OCI-LY7 (cell line): ENCODE measurements at regions of chr1 and their contacts with region 1.

Region 1: GRCh38 chr1:29793101-29793546 is 556.8 kb downstream of the PTPRU start:
- DNase-seq: peak; percentile 80
- H3K4me3 ChIP-seq: no peak overlapping the region
- H3K27ac ChIP-seq: no peak overlapping the region
- H3K4me1 ChIP-seq: peaks cover 5% of the 10 kb centered on the region
- CTCF ChIP-seq: peak; percentile 88

Region 2: DNA sequence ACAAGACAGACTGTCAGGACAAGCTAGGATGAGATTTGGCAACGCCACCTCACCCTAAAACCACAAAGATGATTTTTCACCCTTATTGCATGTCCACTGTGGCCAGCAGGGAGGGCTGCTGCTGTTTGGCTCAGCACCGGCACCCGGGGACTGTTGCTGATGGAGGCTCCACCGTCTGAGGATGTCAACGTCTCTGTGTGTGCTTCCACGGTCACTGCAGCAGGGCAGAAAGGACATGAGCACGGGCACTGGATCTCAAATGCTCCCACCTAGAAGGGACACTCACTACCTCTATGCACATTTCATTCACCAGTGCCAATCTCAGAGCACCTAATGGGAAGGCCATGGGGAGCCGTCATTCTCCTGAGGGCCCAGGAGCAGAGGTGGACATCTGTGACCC is 42.8 kb after region 1 on chr1:
- CTCF ChIA-PET with region 1: no interaction called
- POLR2A ChIA-PET with region 1: no interaction called
- intact Hi-C with region 1: no loop called
- DNase-seq: no peak
- H3K4me3 ChIP-seq: no peak overlapping the region
- H3K27ac ChIP-seq: no peak overlapping the region
- H3K4me1 ChIP-seq: no peaks in the 10 kb centered on the region
- CTCF ChIP-seq: no peak

Region 3: GRCh38 chr1:30171537-30172298 is 378.6 kb after region 1 on chr1:
- CTCF ChIA-PET with region 1: no interaction called
- POLR2A ChIA-PET with region 1: no interaction called
- intact Hi-C with region 1: no loop called
- DNase-seq: no peak
- H3K4me3 ChIP-seq: no peak overlapping the region
- H3K27ac ChIP-seq: no peak overlapping the region
- H3K4me1 ChIP-seq: no peaks in the 10 kb centered on the region
- CTCF ChIP-seq: no peak

Region 4: DNA sequence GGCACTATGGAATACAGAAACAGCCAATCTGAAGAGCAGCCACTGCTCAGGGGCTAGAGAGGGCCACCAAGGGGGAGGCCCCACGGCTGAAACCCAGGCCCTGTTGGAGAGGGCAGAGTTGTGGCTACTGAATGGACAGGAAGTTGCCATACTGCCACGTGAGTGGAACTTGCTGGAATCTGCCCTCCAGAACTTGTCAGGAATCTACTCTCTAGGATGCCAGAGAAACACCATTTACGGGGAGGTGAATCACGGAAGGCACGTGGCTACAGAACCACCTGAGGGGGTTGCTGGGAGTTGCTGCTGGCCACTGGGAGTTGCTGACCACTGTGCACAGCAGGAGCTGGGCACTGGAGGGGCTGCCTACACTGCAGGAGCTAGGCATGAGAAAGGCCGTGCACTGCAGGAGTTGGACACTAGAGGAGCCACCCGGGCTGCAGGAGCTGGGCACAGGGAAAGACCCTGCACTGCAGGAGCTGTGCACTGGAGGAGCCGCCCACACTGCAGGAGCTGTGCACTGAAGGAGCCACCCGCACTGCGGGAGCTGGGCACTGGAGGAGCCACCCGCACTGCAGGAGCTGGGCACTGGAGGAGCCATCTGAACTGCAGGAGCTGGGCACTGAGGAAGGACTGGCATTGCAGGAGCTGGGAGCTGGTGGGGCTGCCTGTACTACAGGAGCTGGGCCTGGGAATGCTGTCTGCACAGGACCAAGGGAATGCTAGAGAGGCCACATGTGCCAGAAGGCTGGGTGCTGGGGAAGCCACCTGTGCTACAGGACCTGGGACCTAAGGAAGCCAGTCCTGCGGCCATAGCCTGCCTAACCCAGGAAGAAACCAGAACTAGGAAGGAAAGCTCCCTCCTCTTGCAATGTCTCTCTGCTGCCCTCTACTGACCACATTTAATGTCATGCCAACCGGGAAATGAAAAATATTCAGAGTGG is 586.8 kb after region 1 on chr1:
- CTCF ChIA-PET with region 1: no interaction called
- POLR2A ChIA-PET with region 1: no interaction called
- intact Hi-C with region 1: loop called (anchors 1 kb)
- DNase-seq: peak; percentile 78
- H3K4me3 ChIP-seq: no peak overlapping the region
- H3K27ac ChIP-seq: no peak overlapping the region
- H3K4me1 ChIP-seq: no peaks in the 10 kb centered on the region
- CTCF ChIP-seq: peak; percentile 90

Region 5: GRCh38 chr1:30645807-30646206 is 852.7 kb after region 1 on chr1:
- CTCF ChIA-PET with region 1: no interaction called
- POLR2A ChIA-PET with region 1: no interaction called
- intact Hi-C with region 1: no loop called
- DNase-seq: no peak
- H3K4me3 ChIP-seq: no peak overlapping the region
- H3K27ac ChIP-seq: no peak overlapping the region
- H3K4me1 ChIP-seq: no peaks in the 10 kb centered on the region
- CTCF ChIP-seq: no peak